Breast epithelium (tissue), 4 donors: ENCODE measurements at regions of chr4 and their contacts with region 1.

Region 1: DNA sequence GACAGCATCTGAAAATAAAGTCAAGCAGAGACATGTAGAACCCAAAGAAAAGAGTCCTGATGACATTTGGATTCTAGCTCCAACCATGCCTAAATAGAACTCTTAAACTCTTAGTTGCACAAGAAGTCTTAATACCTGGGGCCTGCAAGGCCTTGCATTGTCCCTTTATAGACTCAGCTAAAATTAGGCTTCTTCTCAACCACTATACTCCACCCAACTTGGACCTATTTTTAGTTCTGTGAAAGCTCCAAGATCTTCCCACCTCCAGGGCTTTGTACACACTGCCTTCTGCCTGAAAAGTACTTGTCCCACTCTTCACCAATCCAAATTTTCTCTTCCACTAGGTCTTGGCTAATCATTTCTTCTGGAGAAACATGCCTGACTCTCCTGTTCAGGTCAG is 36.5 kb downstream of the PLK4 start:
- DNase-seq: no peak
- H3K4me3 ChIP-seq: no peak overlapping the region
- H3K27ac ChIP-seq: no peak overlapping the region
- H3K4me1 ChIP-seq: no peaks in the 10 kb centered on the region
- H3K27me3 ChIP-seq: no peaks in the 10 kb centered on the region
- CTCF ChIP-seq: no peak
- POLR2A ChIP-seq: no peak

Region 2: DNA sequence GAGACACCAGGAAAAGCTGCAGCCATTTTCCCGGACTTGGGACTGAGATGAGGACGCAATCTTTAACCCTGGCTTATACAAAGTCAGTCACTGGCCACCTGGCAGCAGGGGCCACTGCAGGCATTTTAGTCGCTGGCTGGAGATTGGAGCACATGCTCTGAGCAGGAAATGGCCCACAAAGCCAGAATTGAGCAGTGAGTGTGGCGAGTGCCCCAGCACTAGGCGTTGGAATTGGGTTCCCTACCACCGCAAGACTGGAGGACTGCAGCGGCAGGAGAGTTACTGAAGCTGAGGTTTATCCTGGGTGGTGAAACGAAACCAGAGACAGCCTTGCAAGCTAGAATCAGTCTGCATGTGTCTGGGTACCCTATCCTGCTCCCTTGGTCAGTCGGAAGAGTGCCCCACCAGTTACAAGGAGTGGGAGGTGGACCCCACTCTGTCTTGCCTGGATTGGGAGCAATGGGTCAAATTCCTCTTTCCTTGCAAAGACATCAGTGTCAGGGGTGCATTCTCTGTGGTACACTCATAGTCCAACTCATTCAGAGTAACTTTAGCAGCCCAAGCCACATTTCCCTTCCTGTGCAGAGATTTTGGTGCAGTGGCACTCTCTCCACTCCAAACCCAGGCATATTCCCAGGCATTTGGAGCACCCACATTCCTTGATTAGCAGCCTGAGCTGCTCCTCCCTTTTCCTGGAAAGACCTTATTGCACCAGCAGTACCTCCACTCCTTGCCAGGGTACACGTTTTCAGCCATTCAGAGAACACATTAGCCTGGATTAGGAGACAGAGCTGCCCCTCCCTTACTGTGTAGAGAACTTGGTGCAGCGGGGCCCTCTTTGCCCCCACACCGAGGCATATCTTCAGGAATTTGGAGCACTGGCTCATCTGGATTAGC is 73.2 kb before region 1 on chr4:
- intact Hi-C with region 1: loop called (anchors 2 kb)
- DNase-seq: no peak
- H3K4me3 ChIP-seq: no peak overlapping the region
- H3K27ac ChIP-seq: no peak overlapping the region
- H3K4me1 ChIP-seq: no peaks in the 10 kb centered on the region
- H3K27me3 ChIP-seq: no peaks in the 10 kb centered on the region
- CTCF ChIP-seq: no peak
- POLR2A ChIP-seq: no peak